Right ventricle myocardium inferior (tissue), 1 donor: ENCODE measurements at regions of chr2 and their contacts with region 1.

Region 1: DNA sequence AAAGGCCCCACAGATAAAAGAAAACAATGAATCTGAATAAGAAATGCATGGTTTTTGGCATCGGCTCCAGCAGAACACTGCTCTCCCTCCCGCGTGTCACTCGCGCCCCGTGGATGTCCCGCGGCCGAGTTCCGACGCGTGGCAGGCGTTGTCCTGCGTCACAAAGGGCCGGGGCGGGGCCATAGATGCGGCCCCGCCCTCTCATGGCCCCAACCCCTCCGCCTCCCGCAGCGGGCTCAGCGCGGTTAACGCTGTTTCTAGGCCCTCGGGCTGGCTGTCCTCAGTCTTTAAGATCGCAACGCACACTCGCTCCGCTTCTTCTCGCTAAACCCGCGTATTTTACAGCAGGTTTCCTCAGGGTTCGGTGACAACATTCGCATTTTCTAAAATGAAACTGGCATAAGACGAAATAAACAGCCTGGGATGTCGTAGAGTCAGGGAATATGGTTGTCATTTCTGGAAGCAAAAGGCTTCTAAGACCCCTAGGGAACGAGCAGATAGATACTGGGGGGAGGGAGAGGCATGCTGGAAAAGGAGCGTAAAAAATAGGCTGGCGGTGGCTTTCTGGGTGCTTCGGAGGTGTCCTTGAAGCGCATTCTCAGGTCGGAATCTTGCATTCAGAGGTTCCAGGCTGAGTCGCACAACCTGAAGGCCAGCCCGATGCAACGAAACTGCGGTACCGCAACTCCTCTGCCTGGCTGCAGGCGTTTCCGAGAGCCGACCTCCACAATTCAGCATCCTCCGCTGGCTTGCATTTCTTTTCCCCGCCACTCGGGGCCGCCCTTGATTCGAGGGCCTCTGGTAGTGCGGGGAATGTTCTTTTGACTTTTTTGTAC is at the start of gene FKBP7:
- DNase-seq: peak; percentile 96
- ATAC-seq: peak; percentile 86
- total RNA-seq, gene FKBP7: 9.3 TPM

Region 2: GRCh38 chr2:178280244-178280852 is 198.3 kb before region 1 on chr2:
- intact Hi-C with region 1: no loop called
- DNase-seq: no peak
- ATAC-seq: peak; percentile 60

Region 3: DNA sequence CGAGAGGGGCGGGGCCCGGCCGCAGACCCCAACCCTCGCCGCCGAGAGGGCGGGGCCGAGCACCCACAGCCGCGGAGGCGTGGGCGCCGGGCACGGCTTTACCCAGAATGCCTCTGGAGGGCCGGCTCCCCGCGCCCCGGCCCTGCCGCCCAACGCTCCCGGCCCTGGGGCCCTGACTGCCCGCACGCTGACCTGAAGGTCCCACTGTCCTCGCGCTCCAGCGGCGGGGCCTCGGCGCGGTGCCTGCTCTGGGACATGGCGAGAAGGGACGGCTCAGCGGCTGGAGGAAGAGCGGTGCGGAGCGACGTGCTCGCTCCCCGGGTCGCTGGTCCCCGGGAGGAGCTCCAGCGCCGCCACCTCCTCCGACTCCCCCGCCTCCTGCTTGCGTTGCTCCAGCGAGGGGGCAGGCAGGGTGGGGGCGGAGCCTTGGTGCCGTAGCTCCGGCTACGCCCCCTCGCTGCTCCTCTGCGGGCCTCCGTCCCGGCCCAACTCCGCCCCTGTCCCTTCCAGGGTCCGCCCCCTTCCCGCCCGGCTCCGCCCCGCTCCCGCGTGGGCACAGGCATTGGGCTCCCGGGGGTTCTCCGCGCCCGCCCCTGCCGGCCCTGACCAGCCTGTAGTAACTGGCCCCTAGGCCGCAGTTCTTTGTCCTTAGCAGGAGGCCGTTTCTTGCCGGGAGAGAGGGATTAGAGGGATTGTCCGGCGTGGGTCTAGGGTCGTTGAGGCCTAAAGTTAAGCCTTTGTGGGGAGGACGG is 27.7 kb before region 1 on chr2 and contains the starts of genes PJVK and PRKRA:
- intact Hi-C with region 1: loop called (anchors 1 kb)
- DNase-seq: peak; percentile 99
- ATAC-seq: peak; percentile 99
- total RNA-seq, gene PJVK: 0.70 TPM
- total RNA-seq, gene PRKRA: 45.4 TPM

Region 4: GRCh38 chr2:178522950-178523595 is 44.4 kb after region 1 on chr2:
- intact Hi-C with region 1: loop called (anchors 2 kb)
- DNase-seq: peak; percentile 93
- ATAC-seq: peak; percentile 83